ENCODE measurements at regions of chr14 and their contacts with region 1.

Region 1: DNA sequence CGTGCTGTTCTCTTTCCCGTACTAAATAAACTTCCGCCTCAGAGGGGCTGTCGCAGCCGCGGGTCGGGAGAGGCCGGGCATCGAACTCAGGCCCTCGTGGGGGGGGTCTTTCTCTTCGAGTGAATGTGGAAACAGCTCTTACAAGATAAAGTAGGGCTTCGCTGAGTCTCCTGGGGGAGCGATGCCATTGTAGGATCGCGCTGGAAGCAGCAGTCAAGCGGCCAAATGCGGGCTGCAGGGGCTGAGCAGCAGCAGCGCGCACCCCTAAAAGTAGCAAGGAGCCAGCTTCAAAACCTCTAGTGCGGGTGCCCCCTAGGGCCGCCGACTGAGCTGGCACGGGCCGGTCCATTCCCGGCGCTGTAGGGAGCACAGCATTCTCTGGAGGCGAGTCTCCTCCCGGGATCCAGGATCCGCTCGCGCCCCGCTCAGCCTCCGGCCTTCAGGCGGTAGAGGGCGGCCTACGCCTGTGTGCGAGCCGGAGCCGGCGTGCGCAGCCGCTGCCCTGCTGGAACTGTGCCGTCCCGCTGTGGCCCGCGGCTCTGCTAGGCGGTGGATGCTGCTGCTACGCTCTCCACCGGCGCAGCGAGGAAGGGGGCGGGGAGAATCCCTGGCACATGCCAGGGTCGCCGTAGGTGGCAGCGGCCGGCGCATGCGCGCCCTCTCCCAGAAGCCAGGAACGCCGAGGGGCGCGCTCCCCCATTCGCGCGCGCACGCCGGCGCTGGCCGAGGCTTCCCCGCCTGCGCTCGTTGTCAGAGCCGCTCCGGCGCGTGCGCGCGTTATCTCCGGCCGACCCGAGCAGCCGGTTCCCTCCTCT is at the start of gene FUT8:
- DNase-seq: peak; percentile 97
- H3K4me3 Mint-ChIP-seq: peak within 1 kb of the TSS; percentile 99
- H3K27ac Mint-ChIP-seq: peak within 1 kb of the TSS; percentile 96
- H3K4me1 Mint-ChIP-seq: peaks cover 38% of the 10 kb centered on the region
- H3K27me3 Mint-ChIP-seq: no peaks in the 10 kb centered on the region
- total RNA-seq, gene FUT8: 125 and 137 TPM in 2 replicates

Region 2: GRCh38 chr14:65164068-65164824 is 248.0 kb before region 1 on chr14:
- intact Hi-C with region 1: loop called (anchors 5 kb)
- DNase-seq: peak; percentile 85
- H3K4me3 Mint-ChIP-seq: no peak overlapping the region
- H3K27ac Mint-ChIP-seq: no peak overlapping the region
- H3K4me1 Mint-ChIP-seq: peaks cover 32% of the 10 kb centered on the region
- H3K27me3 Mint-ChIP-seq: no peaks in the 10 kb centered on the region

Region 3: GRCh38 chr14:65302571-65303189 is 109.6 kb before region 1 on chr14:
- intact Hi-C with region 1: loop called (anchors 1 kb)
- DNase-seq: peak; percentile 82
- H3K4me3 Mint-ChIP-seq: peak overlapping the region; percentile 62
- H3K27ac Mint-ChIP-seq: peak overlapping the region; percentile 97
- H3K4me1 Mint-ChIP-seq: peaks cover 67% of the 10 kb centered on the region
- H3K27me3 Mint-ChIP-seq: no peaks in the 10 kb centered on the region

Region 4: GRCh38 chr14:65396082-65396910 is 15.9 kb before region 1 on chr14:
- intact Hi-C with region 1: loop called (anchors 2 kb)
- DNase-seq: no peak
- H3K4me3 Mint-ChIP-seq: peak overlapping the region; percentile 1
- H3K27ac Mint-ChIP-seq: peak overlapping the region; percentile 63
- H3K4me1 Mint-ChIP-seq: peaks cover 15% of the 10 kb centered on the region
- H3K27me3 Mint-ChIP-seq: no peaks in the 10 kb centered on the region

Region 5: DNA sequence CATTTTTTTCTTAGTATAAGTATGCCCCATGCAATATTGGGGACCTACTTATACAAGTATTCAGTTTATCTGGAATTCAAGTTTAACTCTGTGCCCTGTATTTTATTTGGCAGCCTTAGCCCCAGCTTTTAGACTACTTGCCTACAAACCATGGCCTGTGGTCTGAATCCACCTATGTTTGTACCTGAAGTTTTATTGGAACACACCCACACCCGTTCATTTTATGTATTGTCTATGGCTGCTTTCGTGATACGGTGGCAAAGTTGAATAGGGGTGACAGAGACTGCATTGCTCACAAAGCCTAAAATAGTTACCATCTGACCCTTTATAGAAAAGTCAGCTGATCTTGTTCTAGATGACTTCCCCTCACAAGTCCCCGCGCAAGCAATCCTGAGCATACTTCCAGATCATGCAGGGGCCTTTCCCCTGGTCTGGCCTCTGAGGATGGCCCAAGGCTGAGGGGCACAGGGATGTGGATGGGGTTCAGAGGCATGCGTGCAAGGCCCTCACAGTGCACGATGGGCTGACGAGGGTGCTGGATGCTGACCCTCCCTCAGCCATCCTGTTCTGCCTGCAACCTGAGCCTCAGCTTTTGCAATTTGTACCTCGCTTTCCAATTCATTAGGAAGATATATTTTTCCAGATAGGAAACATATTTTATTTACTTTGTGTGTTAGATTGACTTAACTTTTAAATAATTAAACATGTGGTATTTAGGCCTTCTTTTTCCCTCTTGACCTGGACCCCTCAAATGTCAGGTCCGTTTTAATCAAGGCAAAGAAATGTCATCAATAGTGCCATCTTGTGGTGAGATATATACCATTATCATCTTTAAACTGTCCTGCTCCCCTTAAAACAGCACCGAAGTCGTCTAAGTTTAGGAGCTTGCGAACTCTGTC is 546.7 kb after region 1 on chr14:
- intact Hi-C with region 1: loop called (anchors 2 kb)
- DNase-seq: peak; percentile 63
- H3K4me3 Mint-ChIP-seq: no peak overlapping the region
- H3K27ac Mint-ChIP-seq: no peak overlapping the region
- H3K4me1 Mint-ChIP-seq: peaks cover 33% of the 10 kb centered on the region
- H3K27me3 Mint-ChIP-seq: peaks cover 19% of the 10 kb centered on the region